CD4-positive, alpha-beta T cell (primary cell): ENCODE measurements at regions of chr19 and their contacts with region 1.

Region 1: GRCh38 chr19:48780631-48781391 is 25.5 kb downstream of the FGF21 start:
- DNase-seq: peak in 2 of 14 experiments; percentile 43 to 55
- ATAC-seq: no peak
- H3K4me3 ChIP-seq: no peak overlapping the region
- H3K4me3 Mint-ChIP-seq: no peak overlapping the region
- H3K27ac ChIP-seq: no peak overlapping the region
- H3K27ac Mint-ChIP-seq: no peak overlapping the region
- H3K4me1 ChIP-seq: peaks cover 4% of the 10 kb centered on the region
- H3K4me1 Mint-ChIP-seq: peaks cover 4% of the 10 kb centered on the region
- H3K27me3 ChIP-seq: peaks cover 0 to 2% of the 10 kb centered on the region in 2 experiments
- H3K27me3 Mint-ChIP-seq: peaks cover 21% of the 10 kb centered on the region
- CTCF ChIP-seq: no peak

Region 2: GRCh38 chr19:48713864-48714758 is 66.7 kb before region 1 on chr19:
- CTCF ChIA-PET with region 1: no interaction called
- POLR2A ChIA-PET with region 1: no interaction called
- intact Hi-C with region 1: no loop called
- DNase-seq: peak; percentile 94 to 99 (median 96)
- ATAC-seq: peak; percentile 93
- H3K4me3 ChIP-seq: peak overlapping the region; percentile 68
- H3K4me3 Mint-ChIP-seq: peak overlapping the region; percentile 88
- H3K27ac ChIP-seq: peak overlapping the region; percentile 23 to 41
- H3K27ac Mint-ChIP-seq: peak overlapping the region; percentile 50
- H3K4me1 ChIP-seq: peaks cover 25% of the 10 kb centered on the region
- H3K4me1 Mint-ChIP-seq: peaks cover 21% of the 10 kb centered on the region
- H3K27me3 ChIP-seq: no peaks in the 10 kb centered on the region
- H3K27me3 Mint-ChIP-seq: no peaks in the 10 kb centered on the region
- CTCF ChIP-seq: no peak

Region 3: GRCh38 chr19:48770260-48770659 is 10.6 kb before region 1 on chr19:
- CTCF ChIA-PET with region 1: no interaction called
- POLR2A ChIA-PET with region 1: no interaction called
- intact Hi-C with region 1: no loop called
- DNase-seq: no peak
- ATAC-seq: no peak
- H3K4me3 ChIP-seq: no peak overlapping the region
- H3K4me3 Mint-ChIP-seq: no peak overlapping the region
- H3K27ac ChIP-seq: no peak overlapping the region
- H3K27ac Mint-ChIP-seq: no peak overlapping the region
- H3K4me1 ChIP-seq: no peaks in the 10 kb centered on the region
- H3K4me1 Mint-ChIP-seq: no peaks in the 10 kb centered on the region
- H3K27me3 ChIP-seq: peaks cover 4 to 6% of the 10 kb centered on the region in 2 experiments
- H3K27me3 Mint-ChIP-seq: peaks cover 27% of the 10 kb centered on the region
- CTCF ChIP-seq: no peak

Region 4: DNA sequence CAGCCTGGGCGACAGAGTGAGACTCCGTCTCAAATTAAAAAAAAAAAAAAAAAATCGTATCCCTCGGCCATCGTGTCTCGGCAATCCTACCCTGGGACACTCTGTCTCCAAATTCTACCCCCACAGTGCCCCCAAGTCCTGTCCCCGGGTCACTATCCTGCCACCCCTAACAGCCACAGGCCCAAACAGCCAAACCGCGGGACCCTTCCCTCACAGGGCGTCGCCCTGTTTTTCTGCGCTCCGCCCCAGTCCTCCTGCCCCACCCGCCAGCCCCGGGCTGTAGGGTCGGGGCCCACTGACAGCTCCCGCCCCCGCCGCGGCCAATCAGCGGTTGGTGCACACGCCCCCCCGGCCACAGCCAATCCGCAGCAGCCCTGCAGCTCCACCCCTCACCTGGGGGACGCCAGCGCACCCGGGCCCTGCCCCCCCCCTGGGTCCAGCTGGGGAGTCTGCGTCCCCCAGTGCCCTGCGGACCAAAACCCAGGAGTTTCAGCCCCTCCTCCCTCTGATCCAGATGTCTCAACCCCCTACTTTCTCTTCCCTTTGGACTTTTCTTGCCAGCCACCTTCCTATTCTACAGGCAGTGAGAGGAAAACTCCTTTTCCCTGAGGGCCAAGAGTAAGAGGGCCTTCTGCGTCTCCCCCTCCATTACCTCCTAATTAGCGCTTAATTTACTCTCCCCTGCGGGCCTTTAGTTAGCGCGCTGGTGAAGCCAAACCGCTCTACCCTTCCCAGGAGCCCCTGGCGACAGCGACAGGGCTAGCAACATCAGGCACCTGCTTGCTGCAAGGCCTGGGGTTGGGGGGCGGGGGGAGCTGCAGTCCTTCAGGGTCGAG is 31.5 kb after region 1 on chr19:
- CTCF ChIA-PET with region 1: no interaction called
- POLR2A ChIA-PET with region 1: no interaction called
- intact Hi-C with region 1: no loop called
- DNase-seq: peak in 12 of 14 experiments; percentile 27 to 78 (median 63)
- ATAC-seq: peak; percentile 42
- H3K4me3 ChIP-seq: peak overlapping the region; percentile 34
- H3K4me3 Mint-ChIP-seq: peak overlapping the region; percentile 89
- H3K27ac ChIP-seq: no peak overlapping the region
- H3K27ac Mint-ChIP-seq: peak overlapping the region; percentile 51
- H3K4me1 ChIP-seq: peaks cover 31% of the 10 kb centered on the region
- H3K4me1 Mint-ChIP-seq: peaks cover 35% of the 10 kb centered on the region
- H3K27me3 ChIP-seq: no peaks in the 10 kb centered on the region
- H3K27me3 Mint-ChIP-seq: no peaks in the 10 kb centered on the region
- CTCF ChIP-seq: no peak

Region 5: DNA sequence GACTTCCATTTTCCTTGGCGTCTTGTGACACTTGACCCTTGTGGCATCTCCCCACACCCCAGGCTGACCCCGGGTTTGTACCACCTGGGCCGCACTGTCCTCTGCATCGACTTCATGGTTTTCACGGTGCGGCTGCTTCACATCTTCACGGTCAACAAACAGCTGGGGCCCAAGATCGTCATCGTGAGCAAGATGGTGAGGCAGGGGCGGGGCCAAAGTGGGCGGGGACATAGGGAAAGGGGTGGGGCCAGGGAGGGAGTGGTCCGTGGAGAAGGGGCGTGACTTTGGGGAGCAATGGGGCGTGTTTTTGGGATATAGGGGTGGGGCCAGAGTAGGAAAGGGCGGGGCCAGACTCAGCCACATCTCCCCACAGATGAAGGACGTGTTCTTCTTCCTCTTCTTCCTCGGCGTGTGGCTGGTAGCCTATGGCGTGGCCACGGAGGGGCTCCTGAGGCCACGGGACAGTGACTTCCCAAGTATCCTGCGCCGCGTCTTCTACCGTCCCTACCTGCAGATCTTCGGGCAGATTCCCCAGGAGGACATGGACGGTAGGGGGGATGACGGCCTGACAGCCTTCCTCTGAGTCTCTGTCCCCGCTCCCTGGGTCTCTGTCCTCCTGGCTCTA is 419.5 kb after region 1 on chr19:
- CTCF ChIA-PET with region 1: no interaction called
- POLR2A ChIA-PET with region 1: no interaction called
- intact Hi-C with region 1: loop called in 1 of 2 experiments (anchors 5 kb)
- DNase-seq: peak in 2 of 14 experiments; percentile 22 to 50
- ATAC-seq: no peak
- H3K4me3 ChIP-seq: no peak overlapping the region
- H3K4me3 Mint-ChIP-seq: no peak overlapping the region
- H3K27ac ChIP-seq: no peak overlapping the region
- H3K27ac Mint-ChIP-seq: no peak overlapping the region
- H3K4me1 ChIP-seq: no peaks in the 10 kb centered on the region
- H3K4me1 Mint-ChIP-seq: no peaks in the 10 kb centered on the region
- H3K27me3 ChIP-seq: no peaks in the 10 kb centered on the region
- H3K27me3 Mint-ChIP-seq: peaks cover 10% of the 10 kb centered on the region
- CTCF ChIP-seq: no peak